ENCODE measurements at regions of chr3 and their contacts with region 1.

Region 1: DNA sequence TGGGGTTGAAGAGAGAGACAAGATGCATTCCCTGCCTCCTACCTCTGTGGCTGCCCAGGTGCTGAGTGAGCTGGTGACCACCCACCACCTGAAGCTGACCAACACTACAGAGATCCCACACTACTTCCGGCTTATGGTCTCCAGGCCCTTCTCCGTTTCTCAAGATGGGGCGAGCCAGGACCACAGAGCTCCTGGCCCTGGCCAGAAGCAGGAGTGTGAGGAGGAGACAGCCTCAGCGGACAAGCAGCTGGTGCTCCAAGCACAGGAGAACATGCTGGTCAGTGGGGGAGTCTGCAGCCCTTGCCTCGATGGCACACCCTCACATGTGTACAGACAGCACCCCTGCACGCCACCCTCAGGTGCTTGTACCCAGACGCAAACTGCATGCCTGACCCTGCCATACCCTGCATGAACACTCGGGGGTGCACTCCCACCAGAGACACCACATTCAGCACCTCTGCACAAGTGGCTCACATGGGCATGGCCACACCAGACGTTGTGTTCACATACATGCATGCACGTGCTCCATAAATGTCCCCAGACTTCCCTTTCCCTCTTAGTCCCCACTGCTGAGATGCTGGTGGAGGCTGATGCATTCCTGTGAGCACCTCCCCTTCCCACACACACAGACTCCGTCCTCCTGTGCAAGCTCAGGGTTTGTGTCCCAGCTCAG is 19.0 kb downstream of the ACAA1 start:
- DNase-seq: peak; percentile 63
- H3K4me3 ChIP-seq: no peak overlapping the region
- H3K27ac ChIP-seq: no peak overlapping the region
- H3K4me1 ChIP-seq: no peaks in the 10 kb centered on the region
- H3K27me3 ChIP-seq: no peaks in the 10 kb centered on the region
- CTCF ChIP-seq: peak; percentile 65 to 83
- POLR2A ChIP-seq: no peak

Region 2: DNA sequence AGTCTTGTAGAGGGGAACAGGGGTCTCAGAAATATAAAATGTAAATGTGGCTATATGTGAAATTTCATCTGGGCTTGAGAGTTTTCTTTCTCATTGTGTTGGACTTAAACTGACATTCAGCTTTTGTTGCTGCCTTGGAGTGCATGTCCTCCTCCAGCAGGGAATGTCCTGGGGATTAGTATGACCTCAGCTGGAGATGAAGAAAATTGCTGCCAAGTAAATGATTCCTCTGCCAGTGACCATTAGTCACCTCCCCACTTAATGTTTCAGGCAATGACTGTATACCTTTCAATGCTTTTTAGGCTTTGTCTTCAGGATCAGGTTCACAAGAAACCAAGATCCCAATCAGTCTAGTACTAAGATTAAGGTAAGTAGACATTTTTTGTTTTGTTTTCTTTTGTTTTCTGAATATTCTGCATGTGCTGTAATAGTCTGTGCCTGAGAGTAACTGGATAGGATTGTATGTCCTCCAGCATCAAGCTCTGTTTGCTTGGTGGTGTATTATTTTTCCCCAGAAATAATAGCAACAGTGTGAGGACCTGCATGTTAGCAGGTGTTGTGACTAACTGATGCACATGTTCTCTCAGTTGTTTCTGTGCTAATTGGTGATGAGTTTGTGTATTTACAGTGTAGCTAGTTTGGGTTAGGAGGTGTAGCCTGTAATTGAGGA is 129.6 kb after region 1 on chr3:
- CTCF ChIA-PET with region 1: interaction called, 12 read pairs
- POLR2A ChIA-PET with region 1: no interaction called
- dilution Hi-C with region 1: no loop called
- intact Hi-C with region 1: no loop called
- DNase-seq: peak; percentile 74
- H3K4me3 ChIP-seq: no peak overlapping the region
- H3K27ac ChIP-seq: no peak overlapping the region
- H3K4me1 ChIP-seq: no peaks in the 10 kb centered on the region
- H3K27me3 ChIP-seq: no peaks in the 10 kb centered on the region
- CTCF ChIP-seq: peak in 1 of 2 donors; percentile 13
- POLR2A ChIP-seq: no peak

Region 3: DNA sequence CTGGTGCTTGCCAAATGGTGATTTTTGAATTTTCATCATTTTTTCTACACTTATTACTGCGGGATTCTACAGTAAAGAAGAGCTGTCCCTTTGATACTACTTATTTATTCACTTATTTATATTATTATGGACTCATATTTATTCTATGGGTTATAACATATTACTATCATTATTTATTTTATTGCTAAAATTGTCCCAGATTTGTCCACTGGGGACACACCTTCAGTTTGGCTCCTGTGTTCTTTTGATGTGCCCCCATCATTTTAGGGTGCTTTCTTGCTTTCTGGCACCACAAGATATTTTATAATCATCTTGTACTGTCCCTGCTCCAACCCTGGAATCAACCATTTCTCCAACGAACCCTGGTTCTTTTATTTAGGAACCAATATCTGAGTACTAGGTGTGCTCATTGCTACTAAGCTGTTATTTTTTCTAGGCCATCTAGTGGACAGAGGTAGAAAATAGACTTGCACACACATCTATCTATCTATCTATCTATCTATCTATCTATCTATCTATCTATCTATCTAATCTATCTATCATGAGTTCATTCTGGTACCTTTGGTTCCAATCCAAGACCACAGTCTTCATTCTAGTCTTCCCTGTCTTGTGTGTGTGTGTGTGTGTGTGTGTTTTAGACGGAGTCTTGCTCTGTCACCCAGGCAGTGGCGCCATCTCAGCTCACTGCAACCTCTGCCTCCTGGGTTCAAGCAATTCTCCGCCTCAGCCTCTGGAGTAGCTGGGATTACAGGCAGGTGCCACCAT is 180.2 kb after region 1 on chr3:
- CTCF ChIA-PET with region 1: interaction called, 52 read pairs
- POLR2A ChIA-PET with region 1: no interaction called
- dilution Hi-C with region 1: no loop called
- intact Hi-C with region 1: loop called (anchors 5 kb)
- DNase-seq: peak; percentile 33
- H3K4me3 ChIP-seq: no peak overlapping the region
- H3K27ac ChIP-seq: no peak overlapping the region
- H3K4me1 ChIP-seq: no peaks in the 10 kb centered on the region
- H3K27me3 ChIP-seq: no peaks in the 10 kb centered on the region
- CTCF ChIP-seq: peak; percentile 26 to 36
- POLR2A ChIP-seq: no peak

Region 4: DNA sequence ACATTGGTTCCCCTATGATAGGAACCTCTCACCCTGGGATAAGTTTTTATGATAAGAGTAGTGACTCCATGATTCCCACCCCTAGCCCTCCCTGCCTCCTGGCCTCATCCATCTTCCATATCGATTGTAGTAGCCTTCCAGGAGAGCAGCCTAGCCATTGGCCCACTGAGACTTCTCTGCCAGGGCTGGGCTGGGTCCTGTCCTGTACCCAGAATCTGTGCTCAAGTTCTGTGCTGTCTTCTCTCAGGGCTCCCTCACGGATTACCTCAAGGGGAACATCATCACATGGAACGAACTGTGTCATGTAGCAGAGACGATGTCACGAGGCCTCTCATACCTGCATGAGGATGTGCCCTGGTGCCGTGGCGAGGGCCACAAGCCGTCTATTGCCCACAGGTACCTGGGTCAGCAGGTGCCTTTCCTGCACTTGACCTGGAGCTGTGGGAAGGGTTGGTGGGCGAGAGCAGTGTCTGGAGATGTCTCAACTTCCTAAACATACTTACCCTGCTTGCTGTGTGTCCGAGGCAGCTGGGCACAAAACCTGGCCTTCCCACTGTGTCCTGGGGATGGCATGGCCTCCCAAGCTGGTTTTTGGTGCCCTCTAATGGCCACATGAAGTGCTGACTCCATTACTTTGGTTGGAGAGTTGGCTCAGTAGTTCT is 361.7 kb after region 1 on chr3:
- CTCF ChIA-PET with region 1: interaction called, 13 read pairs
- POLR2A ChIA-PET with region 1: no interaction called
- dilution Hi-C with region 1: no loop called
- intact Hi-C with region 1: loop called (anchors 1 kb)
- DNase-seq: peak; percentile 64
- H3K4me3 ChIP-seq: no peak overlapping the region
- H3K27ac ChIP-seq: no peak overlapping the region
- H3K4me1 ChIP-seq: no peaks in the 10 kb centered on the region
- H3K27me3 ChIP-seq: no peaks in the 10 kb centered on the region
- CTCF ChIP-seq: peak; percentile 77 to 84
- POLR2A ChIP-seq: no peak

Region 5: GRCh38 chr3:38834110-38834509 is 716.2 kb after region 1 on chr3:
- CTCF ChIA-PET with region 1: no interaction called
- POLR2A ChIA-PET with region 1: no interaction called
- dilution Hi-C with region 1: no loop called
- intact Hi-C with region 1: no loop called
- DNase-seq: peak; percentile 95
- H3K4me3 ChIP-seq: no peak overlapping the region
- H3K27ac ChIP-seq: peak overlapping the region; percentile 86
- H3K4me1 ChIP-seq: peaks cover 44% of the 10 kb centered on the region
- H3K27me3 ChIP-seq: no peaks in the 10 kb centered on the region
- CTCF ChIP-seq: no peak
- POLR2A ChIP-seq: peak; percentile 33

Measured in endothelial cell of umbilical vein (primary cell).